ENCODE measurements at regions of chr4 and their contacts with region 1.

Region 1: GRCh38 chr4:126583509-126583908 is 1049.2 kb upstream of the INTU start:
- DNase-seq: peak; percentile 6
- H3K4me3 ChIP-seq: no peak overlapping the region
- H3K27ac ChIP-seq: no peak overlapping the region
- H3K4me1 ChIP-seq: no peaks in the 10 kb centered on the region
- H3K27me3 ChIP-seq: no peaks in the 10 kb centered on the region
- CTCF ChIP-seq: peak in 1 of 2 donors; percentile 7
- POLR2A ChIP-seq: no peak

Region 2: DNA sequence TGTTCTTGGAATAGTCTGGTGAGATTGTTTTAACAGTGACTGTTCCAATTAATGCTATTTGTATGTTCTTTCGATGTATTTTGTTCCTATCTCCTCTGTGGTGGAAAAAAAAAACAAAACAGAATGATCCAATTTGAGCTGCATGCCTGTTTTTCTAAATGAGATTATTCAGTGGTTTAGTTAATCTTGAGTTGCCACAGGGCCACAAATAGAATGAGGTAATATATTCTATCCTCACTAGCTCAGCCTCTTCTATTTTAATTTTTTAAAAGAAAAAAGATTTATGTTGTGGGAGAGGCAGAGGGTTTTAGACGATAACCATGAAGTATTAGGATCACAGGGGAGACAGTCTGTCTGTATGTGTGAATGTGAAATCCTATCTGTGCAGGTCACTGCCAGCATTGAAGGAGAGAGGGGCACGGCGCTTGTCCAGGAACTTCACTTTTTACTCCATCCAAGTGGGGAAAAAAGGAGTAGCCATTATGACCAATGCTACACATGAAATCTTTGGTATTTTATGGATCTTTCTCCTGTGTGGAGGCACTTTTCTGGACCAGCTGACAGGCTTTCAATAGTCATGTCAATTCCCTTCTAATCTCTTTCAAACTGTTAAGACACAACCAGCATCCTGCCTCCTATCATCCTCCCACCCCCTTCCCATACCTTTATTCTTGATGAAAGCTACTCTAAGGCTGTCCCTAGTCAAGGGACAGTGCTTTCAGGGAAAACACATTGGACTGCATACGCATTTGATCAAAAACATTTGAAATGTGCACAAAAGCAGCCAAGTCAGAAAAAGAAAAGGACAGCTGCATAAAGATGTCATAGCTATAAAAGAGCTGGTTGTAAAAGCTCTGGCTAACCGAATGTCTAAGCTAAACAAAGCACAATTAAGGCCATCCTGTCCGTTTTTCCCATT is 14.6 kb before region 1 on chr4:
- CTCF ChIA-PET with region 1: interaction called, 10 read pairs
- POLR2A ChIA-PET with region 1: no interaction called
- dilution Hi-C with region 1: no loop called
- intact Hi-C with region 1: no loop called
- DNase-seq: no peak
- H3K4me3 ChIP-seq: no peak overlapping the region
- H3K27ac ChIP-seq: no peak overlapping the region
- H3K4me1 ChIP-seq: no peaks in the 10 kb centered on the region
- H3K27me3 ChIP-seq: no peaks in the 10 kb centered on the region
- CTCF ChIP-seq: no peak
- POLR2A ChIP-seq: no peak

Region 3: DNA sequence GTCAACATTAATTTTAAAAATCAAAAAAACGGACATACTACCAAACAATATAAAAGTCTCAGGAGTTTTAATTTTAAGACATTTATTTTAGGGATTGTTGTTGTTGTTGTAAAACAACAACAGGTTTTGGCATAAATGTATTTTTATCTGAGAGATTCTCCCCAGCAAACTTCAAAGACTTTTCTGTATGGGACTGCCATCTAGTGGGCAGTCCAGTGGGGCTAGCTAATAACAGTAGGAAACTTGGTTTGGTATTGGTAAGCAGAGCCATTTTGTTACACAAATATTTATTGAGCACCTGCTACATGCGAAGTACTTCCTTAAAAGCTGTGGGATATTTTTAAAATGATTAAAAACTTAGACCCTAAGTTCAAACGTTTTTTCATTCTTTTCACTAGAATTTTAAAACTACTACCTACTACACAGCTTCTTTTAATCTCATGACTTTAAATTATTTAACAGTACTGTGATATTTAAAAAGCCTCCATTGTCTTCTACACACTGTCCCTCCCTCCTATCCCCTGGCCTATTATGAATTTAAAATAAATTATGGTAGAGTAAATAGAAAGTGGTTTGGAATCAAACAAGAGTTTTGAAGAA is 20.9 kb after region 1 on chr4:
- CTCF ChIA-PET with region 1: interaction called, 11 read pairs
- POLR2A ChIA-PET with region 1: no interaction called
- dilution Hi-C with region 1: no loop called
- intact Hi-C with region 1: no loop called
- DNase-seq: peak; percentile 39
- H3K4me3 ChIP-seq: no peak overlapping the region
- H3K27ac ChIP-seq: no peak overlapping the region
- H3K4me1 ChIP-seq: no peaks in the 10 kb centered on the region
- H3K27me3 ChIP-seq: no peaks in the 10 kb centered on the region
- CTCF ChIP-seq: peak; percentile 48 to 65
- POLR2A ChIP-seq: no peak

Region 4: DNA sequence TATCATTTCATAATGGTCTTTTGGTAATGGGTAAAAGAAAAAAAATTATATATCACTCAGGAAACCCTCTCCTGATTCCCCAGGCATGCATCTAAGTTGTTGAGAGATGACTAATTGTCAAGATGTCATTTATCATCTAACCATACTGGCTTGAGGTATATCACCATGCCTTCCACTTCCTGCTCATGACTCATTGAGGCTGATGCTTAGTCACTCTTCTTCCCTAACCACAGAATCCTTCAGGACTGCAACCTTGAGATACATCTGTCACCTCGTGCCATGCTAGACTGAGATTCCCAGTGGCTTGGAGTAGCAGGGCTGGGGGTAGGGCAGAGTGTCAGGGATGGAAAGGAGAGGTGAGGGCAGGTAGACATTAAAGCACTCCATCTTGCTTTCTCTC is 266.8 kb after region 1 on chr4:
- CTCF ChIA-PET with region 1: no interaction called
- POLR2A ChIA-PET with region 1: no interaction called
- dilution Hi-C with region 1: no loop called
- intact Hi-C with region 1: no loop called
- DNase-seq: peak; percentile 71
- H3K4me3 ChIP-seq: no peak overlapping the region
- H3K27ac ChIP-seq: no peak overlapping the region
- H3K4me1 ChIP-seq: peaks cover 11% of the 10 kb centered on the region
- H3K27me3 ChIP-seq: no peaks in the 10 kb centered on the region
- CTCF ChIP-seq: no peak
- POLR2A ChIP-seq: no peak